Mammary epithelial cell (primary cell): ENCODE measurements at regions of chr20 and their contacts with region 1.

Region 1: DNA sequence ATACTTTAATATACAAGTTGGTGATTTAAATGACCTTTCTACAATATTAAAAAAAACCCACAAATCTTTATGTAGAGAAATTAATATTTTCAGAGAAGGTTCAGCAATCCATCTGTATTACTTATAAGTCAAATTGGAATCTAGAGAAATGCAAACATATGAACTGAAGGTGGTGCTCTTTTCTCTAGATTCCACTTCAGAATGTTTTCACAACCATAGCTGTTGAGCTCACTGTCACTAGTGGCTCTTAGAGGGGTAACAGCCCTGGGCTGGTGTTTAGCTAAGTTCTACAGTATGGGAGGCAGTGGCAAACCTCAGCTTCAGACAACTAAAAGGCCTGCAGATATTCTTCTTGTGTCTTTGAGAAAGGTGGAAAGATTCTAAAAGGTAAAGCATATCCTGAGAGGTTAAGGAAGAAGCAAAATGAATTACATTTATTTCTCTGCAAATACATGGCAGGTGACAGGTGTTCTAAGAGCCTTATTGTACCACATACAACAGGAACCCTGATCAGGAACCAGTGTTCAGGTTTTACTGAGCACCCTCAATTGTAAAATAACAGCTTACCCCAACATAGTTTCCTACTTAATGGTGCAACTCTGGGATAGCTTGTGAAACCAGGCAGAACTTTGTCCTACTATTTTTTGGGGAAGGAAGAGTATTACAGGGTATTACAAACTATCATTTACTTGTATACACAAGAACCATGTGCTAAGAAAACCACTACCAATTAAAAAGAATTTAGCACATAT is 56.6 kb upstream of the SAMHD1 start:
- DNase-seq: peak; percentile 4
- H3K4me3 ChIP-seq: no peak overlapping the region
- H3K27ac ChIP-seq: no peak overlapping the region
- H3K4me1 ChIP-seq: no peaks in the 10 kb centered on the region
- H3K27me3 ChIP-seq: no peaks in the 10 kb centered on the region
- CTCF ChIP-seq: peak in 1 of 2 donors; percentile 41

Region 2: DNA sequence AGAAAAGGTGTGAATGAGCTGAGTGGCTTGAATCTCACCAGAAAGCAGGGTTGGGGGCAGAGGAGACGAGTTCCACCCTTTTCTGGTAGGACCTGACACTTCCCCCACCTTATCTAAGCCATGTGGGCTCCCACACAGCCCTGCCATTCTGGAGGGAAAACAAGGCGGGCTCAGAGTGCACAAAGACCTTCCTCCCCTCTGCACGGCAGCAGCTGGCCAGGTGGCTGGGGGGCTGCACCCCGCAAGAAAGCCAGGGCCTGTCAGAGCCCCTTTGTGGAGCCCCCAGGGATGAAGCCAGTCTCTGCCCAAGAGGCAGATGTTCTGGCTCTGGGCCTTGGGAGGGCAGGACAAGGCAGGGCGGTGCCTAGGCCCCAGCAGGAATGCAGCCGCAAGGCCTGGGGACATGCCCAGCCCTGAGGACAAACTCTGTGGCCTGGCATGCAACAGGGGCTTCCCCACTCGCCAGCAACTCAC is 186.1 kb before region 1 on chr20:
- CTCF ChIA-PET with region 1: interaction called, 10 read pairs
- dilution Hi-C with region 1: no loop called
- in situ Hi-C with region 1: no loop called
- intact Hi-C with region 1: no loop called
- DNase-seq: peak; percentile 61
- H3K4me3 ChIP-seq: no peak overlapping the region
- H3K27ac ChIP-seq: peak overlapping the region; percentile 34
- H3K4me1 ChIP-seq: peaks cover 25% of the 10 kb centered on the region
- H3K27me3 ChIP-seq: no peaks in the 10 kb centered on the region
- CTCF ChIP-seq: no peak

Region 3: GRCh38 chr20:37081717-37082289 is 73.7 kb after region 1 on chr20:
- CTCF ChIA-PET with region 1: no interaction called
- dilution Hi-C with region 1: no loop called
- in situ Hi-C with region 1: no loop called
- intact Hi-C with region 1: loop called (anchors 1 kb)
- DNase-seq: no peak
- H3K4me3 ChIP-seq: no peak overlapping the region
- H3K27ac ChIP-seq: no peak overlapping the region
- H3K4me1 ChIP-seq: no peaks in the 10 kb centered on the region
- H3K27me3 ChIP-seq: no peaks in the 10 kb centered on the region
- CTCF ChIP-seq: peak; percentile 8 to 26

Region 4: DNA sequence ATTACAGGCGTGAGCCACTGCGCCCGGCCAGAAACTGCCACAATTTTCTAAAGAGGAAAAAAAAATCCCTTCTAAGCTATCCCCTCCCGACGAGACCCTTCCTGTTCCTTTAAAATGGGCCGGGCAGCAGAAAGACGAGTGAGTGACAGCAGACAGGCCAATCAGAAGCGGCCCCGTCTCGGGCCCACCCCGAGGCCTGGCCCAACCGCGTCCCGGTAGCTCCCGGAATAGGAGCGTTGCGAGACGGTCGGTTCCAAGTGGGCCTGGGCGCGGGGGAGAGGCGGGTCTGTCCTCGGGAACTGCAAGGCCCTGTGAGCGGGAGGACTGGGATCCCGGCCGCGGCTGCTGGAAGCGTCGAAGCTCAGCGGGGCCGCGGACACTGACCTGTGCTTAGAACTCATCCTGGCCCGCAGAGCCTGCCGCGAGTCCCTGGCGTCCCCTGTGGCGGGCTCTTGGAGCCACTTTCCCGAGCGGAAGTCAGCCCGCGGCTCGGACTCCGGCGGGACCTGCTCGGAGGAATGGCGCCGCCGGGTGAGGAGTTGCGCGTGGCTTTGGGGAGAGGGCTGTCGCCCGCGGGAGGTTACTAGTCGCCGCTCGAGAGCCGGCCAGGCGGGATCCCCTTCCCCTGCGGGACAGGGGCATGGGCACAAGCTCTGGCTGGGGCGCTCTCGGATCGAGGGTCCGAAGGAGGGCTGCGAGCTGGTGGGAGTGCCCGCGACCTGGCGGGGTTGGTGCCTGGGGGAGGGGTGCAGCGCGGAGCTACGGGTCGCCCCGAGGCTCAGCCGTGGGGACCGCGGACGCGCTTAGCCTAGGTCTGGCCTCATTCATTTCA is 171.0 kb after region 1 on chr20 and contains the starts of genes MROH8 and RPN2:
- CTCF ChIA-PET with region 1: interaction called, 3 read pairs
- dilution Hi-C with region 1: no loop called
- in situ Hi-C with region 1: no loop called
- intact Hi-C with region 1: loop called (anchors 1 kb)
- DNase-seq: peak; percentile 97
- H3K4me3 ChIP-seq: peak within 1 kb of the TSS; percentile 79 to 87 (median 87)
- H3K27ac ChIP-seq: peak within 1 kb of the TSS; percentile 90
- H3K4me1 ChIP-seq: peaks cover 17% of the 10 kb centered on the region
- H3K27me3 ChIP-seq: no peaks in the 10 kb centered on the region
- CTCF ChIP-seq: peak in 1 of 2 donors; percentile 12
- total RNA-seq, gene MROH8: 0.67 to 1.3 TPM
- total RNA-seq, gene RPN2: 157 to 181 TPM

Region 5: DNA sequence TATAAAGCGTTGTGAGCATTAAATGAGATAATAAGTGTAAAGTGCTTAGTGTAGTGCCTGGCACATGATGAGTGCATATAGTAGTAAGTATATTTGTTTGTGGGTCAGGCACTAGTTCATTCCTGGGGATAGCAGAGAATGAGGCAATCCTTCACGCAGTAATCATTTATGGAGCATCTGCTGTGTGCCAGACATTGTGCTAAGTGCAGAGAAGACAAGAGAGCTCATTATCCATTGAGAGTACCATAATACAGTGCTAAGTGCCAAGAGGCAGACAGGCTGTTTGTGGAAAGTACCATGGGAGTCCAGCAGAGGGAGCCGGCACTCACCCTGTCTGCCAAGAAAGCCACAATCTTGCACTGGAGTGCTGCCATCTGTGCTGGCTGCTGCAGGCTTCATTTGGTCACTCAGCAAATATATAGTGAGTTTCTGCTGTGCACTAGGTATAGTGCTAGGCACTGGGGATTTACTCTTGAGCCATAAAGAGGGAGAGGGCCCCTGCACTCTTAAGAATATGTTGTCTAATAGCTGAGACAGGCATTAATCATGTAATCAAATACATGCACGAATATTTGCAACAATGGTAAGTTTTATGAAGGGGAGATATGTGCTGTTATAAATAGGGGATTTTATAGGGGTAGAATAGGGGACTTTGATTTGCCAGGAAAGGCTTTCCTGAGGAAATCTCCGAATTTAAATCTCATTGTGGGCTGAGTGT is 184.2 kb after region 1 on chr20:
- CTCF ChIA-PET with region 1: interaction called, 5 read pairs
- dilution Hi-C with region 1: no loop called
- in situ Hi-C with region 1: no loop called
- intact Hi-C with region 1: loop called (anchors 5 kb)
- DNase-seq: peak; percentile 67
- H3K4me3 ChIP-seq: no peak overlapping the region
- H3K27ac ChIP-seq: no peak overlapping the region
- H3K4me1 ChIP-seq: peaks cover 3% of the 10 kb centered on the region
- H3K27me3 ChIP-seq: no peaks in the 10 kb centered on the region
- CTCF ChIP-seq: peak; percentile 89 to 93